PC-9 (cell line): ENCODE measurements at regions of chr3 and their contacts with region 1.

Region 1: DNA sequence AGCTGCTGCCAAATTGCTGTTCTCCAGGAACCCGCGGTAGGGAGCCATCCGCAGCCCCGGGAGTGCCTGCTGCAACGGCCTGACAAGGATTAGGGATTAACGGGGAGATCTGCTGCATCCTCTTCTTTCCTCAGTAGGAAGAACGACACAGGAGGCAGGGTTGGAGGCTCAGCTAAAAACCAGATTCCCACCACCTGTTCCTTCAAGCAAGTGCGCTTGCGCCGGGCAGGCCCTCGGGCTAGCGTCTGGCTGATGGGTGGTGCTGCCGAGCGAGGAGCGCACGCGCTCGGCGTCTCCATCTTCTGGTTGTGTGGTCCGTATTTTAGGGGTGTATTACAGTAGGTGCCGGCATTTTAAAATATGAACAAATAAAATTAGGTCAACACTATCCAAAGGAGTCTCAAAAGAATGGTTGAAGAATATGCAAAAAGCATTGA is 25.4 kb upstream of the SLC25A26 start:
- DNase-seq: peak; percentile 41 to 55
- H3K4me3 ChIP-seq: peak overlapping the region; percentile 66
- H3K27ac ChIP-seq: no peak overlapping the region
- H3K4me1 ChIP-seq: no peaks in the 10 kb centered on the region; the same call in 1 of the 2 replicates
- H3K27me3 ChIP-seq: no peaks in the 10 kb centered on the region
- CTCF ChIP-seq: no peak; the same call in 1 of the 2 replicates

Region 2: DNA sequence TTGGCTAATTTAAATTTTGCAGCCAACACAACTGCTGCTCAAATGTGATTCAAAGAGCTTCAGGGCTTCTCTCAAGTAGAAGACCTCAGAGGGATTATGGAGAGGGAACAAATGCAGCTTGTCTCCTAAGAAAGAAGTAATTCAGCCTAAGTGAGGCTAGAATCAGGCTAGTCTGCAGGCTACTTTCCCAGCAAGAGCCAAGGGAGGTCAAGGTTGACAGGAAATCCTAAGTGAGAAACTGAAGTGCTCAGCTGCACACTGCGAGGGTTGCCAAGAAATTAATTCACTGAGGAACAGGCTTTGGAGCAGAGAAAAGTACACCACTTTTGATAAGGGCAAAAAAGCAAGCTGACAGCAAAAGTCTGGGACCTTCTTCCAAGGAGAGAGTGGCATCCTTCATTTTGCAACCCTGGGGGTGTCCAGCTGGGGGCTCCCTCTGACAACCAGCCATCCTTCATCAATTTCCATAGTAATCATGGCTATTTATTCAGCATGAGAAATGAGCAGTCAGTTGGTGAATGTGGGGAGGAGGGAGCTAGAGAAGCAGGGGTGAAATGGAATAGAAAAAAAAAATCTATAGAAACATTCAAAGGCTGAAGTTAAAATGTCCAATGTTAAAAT is 861.2 kb before region 1 on chr3:
- CTCF ChIA-PET with region 1: no interaction called
- POLR2A ChIA-PET with region 1: no interaction called
- intact Hi-C with region 1: loop called (anchors 10 kb)
- DNase-seq: no peak
- H3K4me3 ChIP-seq: no peak overlapping the region
- H3K27ac ChIP-seq: no peak overlapping the region
- H3K4me1 ChIP-seq: no peaks in the 10 kb centered on the region
- H3K27me3 ChIP-seq: no peaks in the 10 kb centered on the region
- CTCF ChIP-seq: no peak